Endothelial cell of umbilical vein (primary cell): ENCODE measurements at regions of chr6 and their contacts with region 1.

Region 1: DNA sequence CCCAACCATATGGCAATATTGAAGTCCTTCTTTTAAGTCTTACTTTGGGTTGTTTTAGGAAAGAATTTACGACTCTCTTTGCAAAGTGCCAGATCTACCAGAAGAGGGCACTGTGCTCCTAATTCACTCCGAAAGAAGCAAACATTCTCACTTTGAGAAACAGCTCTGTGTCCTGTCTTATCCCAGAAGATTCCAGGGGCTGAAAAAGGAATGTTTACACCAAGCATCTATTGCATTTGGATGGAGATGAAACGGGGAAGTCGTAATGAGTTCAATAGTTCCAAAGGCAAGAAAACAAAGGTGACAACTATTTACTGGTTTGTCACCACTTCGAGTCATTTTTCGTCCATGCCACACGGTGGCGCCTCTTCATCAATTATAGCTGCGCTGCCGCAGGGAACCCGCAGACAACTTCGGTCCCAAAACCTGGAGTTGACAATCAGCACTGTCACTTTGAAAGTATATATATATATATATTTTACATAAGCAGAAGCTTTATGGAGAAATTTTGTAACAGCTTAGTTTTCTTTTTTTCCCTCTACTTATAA is 121.6 kb downstream of the MOXD1 start:
- DNase-seq: peak; percentile 86
- H3K4me3 ChIP-seq: peak overlapping the region; percentile 8 to 59 (median 15)
- H3K27ac ChIP-seq: no peak overlapping the region
- H3K4me1 ChIP-seq: no peaks in the 10 kb centered on the region
- H3K27me3 ChIP-seq: peaks cover 4 to 8% of the 10 kb centered on the region in 2 experiments
- CTCF ChIP-seq: peak; percentile 64 to 78
- POLR2A ChIP-seq: no peak

Region 2: GRCh38 chr6:131721161-131721560 is 558.5 kb before region 1 on chr6:
- CTCF ChIA-PET with region 1: no interaction called
- POLR2A ChIA-PET with region 1: no interaction called
- dilution Hi-C with region 1: no loop called
- intact Hi-C with region 1: no loop called
- DNase-seq: no peak
- H3K4me3 ChIP-seq: no peak overlapping the region
- H3K27ac ChIP-seq: no peak overlapping the region
- H3K4me1 ChIP-seq: no peaks in the 10 kb centered on the region
- H3K27me3 ChIP-seq: peaks cover 0 to 2% of the 10 kb centered on the region in 2 experiments
- CTCF ChIP-seq: no peak
- POLR2A ChIP-seq: no peak

Region 3: DNA sequence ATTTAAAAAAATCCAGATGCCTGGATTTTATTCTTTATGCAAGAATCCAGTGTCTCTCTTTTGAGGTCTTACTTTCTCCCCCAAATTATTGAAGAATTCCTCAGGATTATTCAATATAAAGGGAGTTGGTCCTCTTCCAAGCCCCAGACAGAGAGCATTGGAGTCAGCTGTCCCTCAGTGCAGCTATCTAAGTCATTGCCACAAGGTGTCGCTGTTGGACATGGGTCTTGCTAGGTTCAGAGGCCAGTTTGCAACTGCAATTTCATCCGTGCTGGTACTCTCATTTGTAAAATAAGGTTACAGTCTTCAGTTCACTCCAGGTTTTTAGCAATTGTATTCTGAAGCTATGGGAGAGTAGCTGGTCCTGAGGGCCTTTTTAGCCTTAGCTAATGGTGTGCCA is 356.3 kb before region 1 on chr6:
- CTCF ChIA-PET with region 1: interaction called, 222 read pairs
- POLR2A ChIA-PET with region 1: no interaction called
- dilution Hi-C with region 1: no loop called
- intact Hi-C with region 1: loop called (anchors 1 kb)
- DNase-seq: peak; percentile 41
- H3K4me3 ChIP-seq: no peak overlapping the region
- H3K27ac ChIP-seq: no peak overlapping the region
- H3K4me1 ChIP-seq: no peaks in the 10 kb centered on the region
- H3K27me3 ChIP-seq: no peaks in the 10 kb centered on the region
- CTCF ChIP-seq: peak; percentile 64 to 72
- POLR2A ChIP-seq: no peak

Region 4: GRCh38 chr6:131998255-131998982 is 281.2 kb before region 1 on chr6:
- CTCF ChIA-PET with region 1: no interaction called
- POLR2A ChIA-PET with region 1: no interaction called
- dilution Hi-C with region 1: no loop called
- intact Hi-C with region 1: no loop called
- DNase-seq: no peak
- H3K4me3 ChIP-seq: no peak overlapping the region
- H3K27ac ChIP-seq: no peak overlapping the region
- H3K4me1 ChIP-seq: peaks cover 11% of the 10 kb centered on the region
- H3K27me3 ChIP-seq: no peaks in the 10 kb centered on the region
- CTCF ChIP-seq: no peak
- POLR2A ChIP-seq: no peak

Region 5: DNA sequence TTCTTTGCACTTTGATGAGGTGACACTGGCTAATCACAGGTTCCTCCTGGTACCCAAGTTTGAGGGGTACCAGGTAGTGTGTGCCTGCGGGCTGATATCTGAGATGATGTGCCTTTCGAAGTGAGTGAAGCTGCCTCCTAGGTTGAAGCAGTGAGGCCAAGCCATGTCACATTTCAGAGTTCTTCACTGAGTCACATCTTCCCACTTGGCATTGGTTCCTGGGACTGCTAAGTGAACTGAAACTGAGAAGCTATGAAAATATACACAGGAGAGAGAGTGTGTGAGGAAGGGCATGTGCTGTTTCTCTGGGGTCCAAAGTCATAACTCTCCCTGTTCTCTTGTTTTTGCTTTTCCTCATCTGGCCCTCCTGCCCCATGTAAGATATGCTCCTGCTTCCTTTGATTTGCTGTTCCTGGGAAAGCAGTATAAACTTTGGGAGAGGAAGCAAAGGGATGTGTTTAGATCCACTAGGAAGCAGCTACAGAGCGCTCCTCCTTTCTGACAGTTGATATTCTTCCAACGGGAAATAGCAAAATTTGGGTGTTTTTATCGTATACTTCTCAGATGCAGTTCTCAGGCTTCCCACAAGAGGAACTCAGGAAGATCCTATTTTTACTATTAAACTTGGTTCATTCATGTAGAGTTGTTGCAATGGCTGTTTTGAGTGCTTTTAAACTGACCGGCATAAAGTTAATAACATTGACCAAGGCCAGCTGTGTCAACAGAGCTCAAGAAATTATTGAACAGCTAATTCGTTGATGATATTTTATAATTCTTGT is 32.1 kb before region 1 on chr6:
- CTCF ChIA-PET with region 1: interaction called, 13 read pairs
- POLR2A ChIA-PET with region 1: no interaction called
- dilution Hi-C with region 1: no loop called
- intact Hi-C with region 1: no loop called
- DNase-seq: no peak
- H3K4me3 ChIP-seq: no peak overlapping the region
- H3K27ac ChIP-seq: no peak overlapping the region
- H3K4me1 ChIP-seq: no peaks in the 10 kb centered on the region
- H3K27me3 ChIP-seq: peaks cover 0 to 2% of the 10 kb centered on the region in 2 experiments
- CTCF ChIP-seq: no peak
- POLR2A ChIP-seq: no peak

Region 6: DNA sequence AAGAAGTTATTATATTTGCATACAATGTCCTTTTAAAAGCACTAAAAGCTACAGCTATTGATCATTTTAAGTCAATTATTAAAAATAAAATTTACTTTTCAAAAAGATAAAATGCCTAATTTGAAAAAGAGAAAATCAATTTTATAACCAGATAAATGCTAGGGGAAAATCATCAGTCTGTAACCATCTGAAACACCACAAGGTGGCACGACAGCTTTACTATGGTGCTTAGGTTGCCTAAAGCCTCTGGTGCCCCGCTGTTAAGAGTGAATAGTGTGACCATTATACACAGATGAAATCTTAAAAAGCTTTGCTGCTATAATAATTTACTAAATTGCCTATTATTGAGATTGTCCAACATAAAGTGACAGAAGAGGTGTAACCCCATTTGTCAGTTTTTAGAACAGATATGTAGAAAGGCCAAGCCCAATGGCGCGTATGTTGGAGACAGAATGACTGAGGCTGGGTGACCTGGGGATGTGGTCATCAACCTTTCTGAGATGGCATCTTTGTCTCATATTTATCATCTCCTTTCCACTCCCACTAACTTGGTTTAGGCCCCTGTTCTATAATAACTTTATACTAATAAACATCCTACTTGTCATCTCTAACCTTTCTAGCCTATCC is 20.8 kb after region 1 on chr6:
- CTCF ChIA-PET with region 1: interaction called, 360 read pairs
- POLR2A ChIA-PET with region 1: no interaction called
- dilution Hi-C with region 1: no loop called
- intact Hi-C with region 1: loop called (anchors 1 kb)
- DNase-seq: peak; percentile 53
- H3K4me3 ChIP-seq: no peak overlapping the region
- H3K27ac ChIP-seq: no peak overlapping the region
- H3K4me1 ChIP-seq: no peaks in the 10 kb centered on the region
- H3K27me3 ChIP-seq: peaks cover 12 to 16% of the 10 kb centered on the region in 2 experiments
- CTCF ChIP-seq: peak; percentile 38 to 47
- POLR2A ChIP-seq: no peak

Region 7: DNA sequence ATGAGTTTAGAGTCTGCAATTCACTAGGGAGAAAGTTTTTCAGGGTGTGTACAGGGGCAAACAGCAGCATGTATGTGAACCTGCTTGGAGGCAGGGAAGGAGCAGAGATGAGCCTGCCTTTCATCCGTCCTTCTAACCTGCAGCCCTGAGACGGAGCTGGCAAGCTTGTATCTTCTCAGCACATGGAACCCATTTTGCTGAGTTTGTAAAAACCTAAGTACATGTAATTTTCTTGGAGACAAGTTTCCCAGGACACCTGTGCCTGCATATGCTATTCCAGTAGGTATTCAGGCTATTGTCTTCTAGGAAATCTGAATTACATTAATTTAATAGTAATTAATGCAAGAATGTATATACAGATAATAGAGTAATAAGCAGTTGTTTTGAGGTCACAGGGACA is 150.4 kb after region 1 on chr6:
- CTCF ChIA-PET with region 1: interaction called, 16 read pairs
- POLR2A ChIA-PET with region 1: no interaction called
- dilution Hi-C with region 1: no loop called
- intact Hi-C with region 1: no loop called
- DNase-seq: no peak
- H3K4me3 ChIP-seq: no peak overlapping the region
- H3K27ac ChIP-seq: no peak overlapping the region
- H3K4me1 ChIP-seq: no peaks in the 10 kb centered on the region
- H3K27me3 ChIP-seq: peaks cover 0 to 8% of the 10 kb centered on the region in 2 experiments
- CTCF ChIP-seq: no peak
- POLR2A ChIP-seq: no peak

Region 8: DNA sequence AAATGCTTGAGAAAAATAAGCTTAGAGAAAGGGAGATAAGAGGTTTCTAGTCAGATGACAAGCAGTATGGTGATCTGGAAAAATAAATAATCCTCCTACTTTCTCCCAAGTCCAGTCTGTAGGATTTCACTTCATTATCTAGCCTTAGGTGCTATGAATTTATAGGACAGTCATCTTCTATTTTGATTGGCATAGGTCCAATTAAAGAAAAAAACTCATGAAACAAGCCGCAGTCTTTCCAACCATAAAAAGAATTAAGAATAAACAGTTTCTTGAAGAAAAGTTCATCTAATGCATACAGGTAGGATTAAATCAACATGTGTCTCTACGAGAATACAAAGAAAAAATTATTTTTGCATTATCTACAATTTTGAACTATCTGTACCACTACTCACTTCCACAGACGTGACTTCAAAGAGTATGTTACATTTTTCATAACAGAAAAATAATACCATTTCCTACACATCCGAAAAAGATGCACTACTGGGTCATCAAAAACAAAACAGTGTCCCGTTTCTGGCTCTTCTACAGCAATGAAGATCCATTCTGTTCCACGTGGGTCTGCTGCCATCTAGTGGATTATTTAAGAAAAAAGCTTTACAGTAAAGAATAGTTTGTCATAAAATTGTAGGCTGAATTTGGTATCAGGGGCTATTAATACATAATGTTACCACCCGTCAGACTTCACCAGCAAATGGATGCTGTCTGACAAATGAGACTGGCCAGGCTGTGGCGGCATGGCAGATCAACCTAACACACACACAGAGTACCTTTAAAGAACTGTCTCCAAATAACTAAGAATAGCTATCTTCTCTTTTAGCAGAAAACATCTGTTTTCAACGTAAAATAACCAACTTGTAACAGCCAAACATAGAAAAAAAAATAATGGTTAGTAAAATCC is 204.4 kb after region 1 on chr6:
- CTCF ChIA-PET with region 1: interaction called, 254 read pairs
- POLR2A ChIA-PET with region 1: no interaction called
- dilution Hi-C with region 1: no loop called
- intact Hi-C with region 1: loop called (anchors 1 kb)
- DNase-seq: peak; percentile 71
- H3K4me3 ChIP-seq: no peak overlapping the region
- H3K27ac ChIP-seq: no peak overlapping the region
- H3K4me1 ChIP-seq: no peaks in the 10 kb centered on the region
- H3K27me3 ChIP-seq: no peaks in the 10 kb centered on the region
- CTCF ChIP-seq: peak; percentile 46 to 48
- POLR2A ChIP-seq: no peak

Region 9: GRCh38 chr6:132669690-132670291 is 390.1 kb after region 1 on chr6:
- CTCF ChIA-PET with region 1: interaction called, 14 read pairs
- POLR2A ChIA-PET with region 1: no interaction called
- dilution Hi-C with region 1: no loop called
- intact Hi-C with region 1: no loop called
- DNase-seq: peak; percentile 56
- H3K4me3 ChIP-seq: no peak overlapping the region
- H3K27ac ChIP-seq: no peak overlapping the region
- H3K4me1 ChIP-seq: peaks cover 2% of the 10 kb centered on the region
- H3K27me3 ChIP-seq: no peaks in the 10 kb centered on the region
- CTCF ChIP-seq: peak in 1 of 2 donors; percentile 18
- POLR2A ChIP-seq: no peak